HepG2 (cell line): ENCODE measurements at regions of chr1 and their contacts with region 1.

Region 1: GRCh38 chr1:6171548-6172119 is 8.5 kb downstream of the CHD5 start:
- DNase-seq: peak; percentile 35
- ATAC-seq: peak; percentile 87
- H3K4me3 ChIP-seq: no peak overlapping the region
- H3K27ac ChIP-seq: no peak overlapping the region
- H3K4me1 ChIP-seq: peaks cover 15% of the 10 kb centered on the region
- H3K27me3 ChIP-seq: peaks cover 20 to 62% of the 10 kb centered on the region in 2 experiments; a peak in 4 of 5 replicates
- CTCF ChIP-seq: peak; percentile 86
- EP300 ChIP-seq: no peak
- POLR2A ChIP-seq: no peak
- RAD21 ChIP-seq: peak; percentile 73

Region 2: GRCh38 chr1:6052543-6053205 is 119.0 kb before region 1 on chr1:
- CTCF ChIA-PET with region 1: interaction called, 8 read pairs
- POLR2A ChIA-PET with region 1: no interaction called
- in situ Hi-C with region 1: no loop called
- intact Hi-C with region 1: loop called (anchors 1 kb)
- DNase-seq: peak; percentile 43
- ATAC-seq: peak; percentile 71
- H3K4me3 ChIP-seq: no peak overlapping the region
- H3K27ac ChIP-seq: no peak overlapping the region
- H3K4me1 ChIP-seq: peaks cover 12% of the 10 kb centered on the region
- H3K27me3 ChIP-seq: no peaks in the 10 kb centered on the region
- CTCF ChIP-seq: peak; percentile 74
- EP300 ChIP-seq: no peak
- POLR2A ChIP-seq: no peak
- RAD21 ChIP-seq: no peak

Region 3: GRCh38 chr1:6065093-6065858 is 106.4 kb before region 1 on chr1:
- CTCF ChIA-PET with region 1: no interaction called
- POLR2A ChIA-PET with region 1: no interaction called
- in situ Hi-C with region 1: no loop called
- intact Hi-C with region 1: no loop called
- DNase-seq: no peak
- ATAC-seq: no peak
- H3K4me3 ChIP-seq: no peak overlapping the region
- H3K27ac ChIP-seq: no peak overlapping the region
- H3K4me1 ChIP-seq: no peaks in the 10 kb centered on the region
- H3K27me3 ChIP-seq: peaks cover 0 to 1% of the 10 kb centered on the region in 2 experiments; a peak in 2 of 5 replicates
- CTCF ChIP-seq: no peak
- EP300 ChIP-seq: no peak
- POLR2A ChIP-seq: no peak
- RAD21 ChIP-seq: no peak

Region 4: GRCh38 chr1:6108937-6109614 is 62.6 kb before region 1 on chr1:
- CTCF ChIA-PET with region 1: interaction called, 9 read pairs
- POLR2A ChIA-PET with region 1: no interaction called
- in situ Hi-C with region 1: loop called (anchors 5 kb)
- intact Hi-C with region 1: loop called (anchors 2 kb)
- DNase-seq: peak; percentile 20
- ATAC-seq: peak; percentile 77
- H3K4me3 ChIP-seq: no peak overlapping the region
- H3K27ac ChIP-seq: no peak overlapping the region
- H3K4me1 ChIP-seq: no peaks in the 10 kb centered on the region
- H3K27me3 ChIP-seq: peaks cover 6 to 50% of the 10 kb centered on the region in 2 experiments
- CTCF ChIP-seq: peak; percentile 73
- EP300 ChIP-seq: no peak
- POLR2A ChIP-seq: no peak
- RAD21 ChIP-seq: peak; percentile 78